ENCODE measurements at regions of chr11 and their contacts with region 1.

Region 1: DNA sequence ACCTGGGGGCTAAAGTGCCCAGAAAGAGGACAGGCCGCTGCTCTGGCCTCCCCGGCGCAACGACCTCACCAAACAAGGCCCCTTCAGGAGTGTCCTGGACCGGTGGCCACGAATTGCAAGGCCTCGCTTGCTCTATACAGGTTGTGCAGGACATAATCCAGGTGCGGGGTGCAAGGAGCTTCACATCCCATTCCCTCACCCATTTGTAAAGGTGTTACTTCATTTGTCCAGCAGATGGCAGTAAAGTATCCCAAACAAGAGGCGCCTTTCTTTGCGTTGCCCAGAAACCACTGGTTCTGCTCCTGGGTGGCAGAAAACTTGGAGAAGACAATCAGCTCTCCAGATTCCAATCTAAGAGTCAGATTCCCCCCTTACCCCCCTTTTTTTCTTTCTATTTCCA is 35.9 kb upstream of the PRDM11 start:
- DNase-seq: no peak
- H3K4me3 ChIP-seq: no peak overlapping the region
- CTCF ChIP-seq: peak; percentile 60

Region 2: GRCh38 chr11:45042557-45042956 is 68.0 kb before region 1 on chr11:
- CTCF ChIA-PET with region 1: no interaction called
- POLR2A ChIA-PET with region 1: no interaction called
- DNase-seq: no peak
- H3K4me3 ChIP-seq: no peak overlapping the region
- CTCF ChIP-seq: no peak

Region 3: GRCh38 chr11:45133871-45134270 is 23.3 kb after region 1 on chr11:
- CTCF ChIA-PET with region 1: interaction called, 17 read pairs
- POLR2A ChIA-PET with region 1: no interaction called
- DNase-seq: no peak
- H3K4me3 ChIP-seq: no peak overlapping the region
- CTCF ChIP-seq: no peak

Region 4: DNA sequence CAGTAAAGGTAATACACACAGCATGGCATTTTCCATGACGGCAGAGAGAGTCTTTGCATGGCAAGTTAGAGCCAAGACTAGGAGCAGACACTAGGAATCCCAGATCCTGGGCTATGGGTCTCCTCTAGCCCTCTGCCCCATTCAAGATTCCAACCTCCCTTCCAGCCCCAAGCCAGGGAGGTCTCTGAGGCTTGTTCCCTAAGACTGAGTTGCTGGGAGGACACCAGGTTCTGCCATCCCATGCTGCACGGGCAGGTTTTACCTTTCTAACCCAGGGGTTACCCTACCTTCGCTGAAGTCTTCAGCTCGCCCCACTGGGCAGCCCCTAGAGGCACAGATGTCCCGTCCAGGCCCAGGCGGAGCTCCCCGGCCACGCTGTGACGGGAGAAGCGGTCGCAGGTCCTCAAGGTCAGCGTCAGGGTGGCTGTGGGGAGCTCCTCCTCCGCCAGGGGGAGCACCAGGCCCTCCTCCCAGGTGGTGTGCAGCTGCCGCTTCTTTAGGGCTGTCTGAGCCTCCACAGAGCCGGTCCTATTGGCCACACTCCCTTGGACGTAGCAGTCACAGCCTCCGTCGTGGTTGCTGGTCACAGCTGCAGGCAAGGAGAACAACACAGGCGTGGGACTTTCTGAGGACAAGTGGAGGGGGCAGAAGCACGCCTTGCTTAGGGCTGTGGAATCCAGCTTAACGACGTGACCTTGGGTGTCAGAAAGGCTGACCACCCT is 141.7 kb after region 1 on chr11:
- CTCF ChIA-PET with region 1: interaction called, 11 read pairs
- POLR2A ChIA-PET with region 1: no interaction called
- DNase-seq: no peak
- H3K4me3 ChIP-seq: no peak overlapping the region
- CTCF ChIP-seq: peak; percentile 93

Region 5: DNA sequence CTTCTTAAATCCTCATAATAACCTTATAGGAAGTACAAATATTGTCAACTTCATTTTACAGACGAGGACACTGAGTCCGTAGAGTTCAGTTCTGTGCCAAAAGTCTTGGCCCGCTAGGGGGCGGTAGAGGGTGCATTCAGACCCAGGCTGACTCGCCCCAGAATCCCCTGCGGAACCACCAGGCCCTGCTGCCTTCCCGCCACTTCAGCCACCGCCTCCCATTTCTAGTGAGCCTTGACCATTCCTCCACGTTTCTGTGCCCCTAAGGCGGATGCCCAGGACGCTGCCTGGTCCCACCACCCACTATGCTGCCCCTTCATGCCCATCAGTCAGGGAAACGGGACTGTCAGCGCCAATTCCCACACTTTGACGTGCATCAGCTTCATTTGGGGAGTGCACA is 156.5 kb after region 1 on chr11:
- CTCF ChIA-PET with region 1: interaction called, 11 read pairs
- POLR2A ChIA-PET with region 1: no interaction called
- DNase-seq: no peak
- H3K4me3 ChIP-seq: no peak overlapping the region
- CTCF ChIP-seq: no peak

Region 6: GRCh38 chr11:45280449-45280848 is 169.9 kb after region 1 on chr11:
- CTCF ChIA-PET with region 1: interaction called, 439 read pairs
- POLR2A ChIA-PET with region 1: no interaction called
- DNase-seq: no peak
- H3K4me3 ChIP-seq: no peak overlapping the region
- CTCF ChIP-seq: no peak

Region 7: DNA sequence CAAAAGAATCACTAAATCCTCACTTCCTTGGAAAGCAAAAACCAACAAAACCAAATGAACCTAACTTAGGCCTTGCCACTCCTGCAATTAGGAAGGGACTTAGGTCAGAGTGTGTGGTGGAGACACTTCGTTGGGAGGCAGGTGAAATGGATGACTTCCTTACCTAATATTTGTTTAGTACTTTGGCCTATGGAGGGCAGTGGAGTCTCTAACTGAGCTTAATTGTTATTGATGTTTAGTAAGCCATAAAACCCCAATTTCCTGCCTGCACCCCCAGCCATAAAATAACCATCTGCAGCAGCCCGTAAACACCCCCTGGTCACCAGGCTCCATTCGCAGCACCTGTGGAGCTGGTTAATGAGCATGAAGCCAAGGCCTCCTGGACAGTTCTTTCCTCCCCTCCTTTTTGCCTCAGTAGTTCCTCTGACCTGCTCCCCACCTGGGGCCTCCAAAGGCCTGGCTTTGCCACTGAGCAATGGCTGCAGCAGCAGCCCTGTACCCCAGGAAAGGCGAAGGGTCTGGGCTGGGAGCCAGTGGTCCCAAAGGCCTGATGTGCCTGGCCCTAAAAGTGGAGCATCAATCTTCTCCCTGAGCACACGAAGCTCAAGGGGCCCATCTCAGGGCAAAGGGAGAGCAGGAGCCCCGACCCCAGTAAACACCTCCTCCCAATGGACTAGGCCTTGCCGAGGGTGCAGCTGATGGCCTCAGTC is 191.1 kb after region 1 on chr11:
- CTCF ChIA-PET with region 1: interaction called, 439 read pairs
- POLR2A ChIA-PET with region 1: no interaction called
- DNase-seq: no peak
- H3K4me3 ChIP-seq: no peak overlapping the region
- CTCF ChIP-seq: no peak

Region 8: GRCh38 chr11:45339729-45340519 is 229.4 kb after region 1 on chr11:
- CTCF ChIA-PET with region 1: interaction called, 344 read pairs
- POLR2A ChIA-PET with region 1: no interaction called
- DNase-seq: no peak
- H3K4me3 ChIP-seq: peak overlapping the region; percentile 38
- CTCF ChIP-seq: peak; percentile 93

Measured in AG04449 (cell line).